ENCODE measurements at regions of chr16 and their contacts with region 1.

Region 1: GRCh38 chr16:23803591-23804123 is 32.1 kb upstream of the PRKCB start:
- DNase-seq: peak; percentile 79 to 91 (median 85)
- ATAC-seq: peak; percentile 98
- H3K4me3 ChIP-seq: peak overlapping the region; percentile 9; the same call in 1 of the 2 replicates
- H3K27ac ChIP-seq: peak overlapping the region; percentile 58
- H3K4me1 ChIP-seq: peaks cover 3 to 22% of the 10 kb centered on the region in 2 experiments; a peak in 4 of 5 replicates
- H3K27me3 ChIP-seq: no peaks in the 10 kb centered on the region
- CTCF ChIP-seq: peak; percentile 89 to 93 (median 93)
- EP300 ChIP-seq: no peak; the same call in 1 of the 2 replicates
- POLR2A ChIP-seq: no peak
- RAD21 ChIP-seq: peak; percentile 82 to 95

Region 2: GRCh38 chr16:23823475-23824384 is 20.1 kb after region 1 on chr16:
- CTCF ChIA-PET with region 1: no interaction called
- POLR2A ChIA-PET with region 1: interaction called, 14 read pairs
- in situ Hi-C with region 1: no loop called
- intact Hi-C with region 1: loop called (anchors 2 kb)
- DNase-seq: peak in 1 of 4 experiments; percentile 78
- ATAC-seq: peak; percentile 51
- H3K4me3 ChIP-seq: no peak overlapping the region
- H3K27ac ChIP-seq: peak overlapping the region; percentile 82
- H3K4me1 ChIP-seq: peaks cover 28 to 51% of the 10 kb centered on the region in 2 experiments
- H3K27me3 ChIP-seq: no peaks in the 10 kb centered on the region
- CTCF ChIP-seq: no peak
- EP300 ChIP-seq: peak; percentile 8; the same call in 1 of the 2 replicates
- POLR2A ChIP-seq: no peak
- RAD21 ChIP-seq: no peak

Region 3: GRCh38 chr16:23877107-23878090 is 73.7 kb after region 1 on chr16:
- CTCF ChIA-PET with region 1: no interaction called
- POLR2A ChIA-PET with region 1: interaction called, 5 read pairs
- in situ Hi-C with region 1: no loop called
- intact Hi-C with region 1: loop called (anchors 1 kb)
- DNase-seq: no peak
- ATAC-seq: peak; percentile 49
- H3K4me3 ChIP-seq: no peak overlapping the region
- H3K27ac ChIP-seq: 0 out of 3 replicates have a peak overlapping the region, but pooled peaks have one; percentile 5
- H3K4me1 ChIP-seq: peaks cover 7 to 19% of the 10 kb centered on the region in 2 experiments; a peak in 3 of 5 replicates
- H3K27me3 ChIP-seq: no peaks in the 10 kb centered on the region
- CTCF ChIP-seq: peak; percentile 10 to 38 (median 32); a peak in 3 of 6 replicates
- EP300 ChIP-seq: no peak
- POLR2A ChIP-seq: no peak
- RAD21 ChIP-seq: peak; percentile 21 to 45; a peak in 2 of 4 replicates

Region 4: DNA sequence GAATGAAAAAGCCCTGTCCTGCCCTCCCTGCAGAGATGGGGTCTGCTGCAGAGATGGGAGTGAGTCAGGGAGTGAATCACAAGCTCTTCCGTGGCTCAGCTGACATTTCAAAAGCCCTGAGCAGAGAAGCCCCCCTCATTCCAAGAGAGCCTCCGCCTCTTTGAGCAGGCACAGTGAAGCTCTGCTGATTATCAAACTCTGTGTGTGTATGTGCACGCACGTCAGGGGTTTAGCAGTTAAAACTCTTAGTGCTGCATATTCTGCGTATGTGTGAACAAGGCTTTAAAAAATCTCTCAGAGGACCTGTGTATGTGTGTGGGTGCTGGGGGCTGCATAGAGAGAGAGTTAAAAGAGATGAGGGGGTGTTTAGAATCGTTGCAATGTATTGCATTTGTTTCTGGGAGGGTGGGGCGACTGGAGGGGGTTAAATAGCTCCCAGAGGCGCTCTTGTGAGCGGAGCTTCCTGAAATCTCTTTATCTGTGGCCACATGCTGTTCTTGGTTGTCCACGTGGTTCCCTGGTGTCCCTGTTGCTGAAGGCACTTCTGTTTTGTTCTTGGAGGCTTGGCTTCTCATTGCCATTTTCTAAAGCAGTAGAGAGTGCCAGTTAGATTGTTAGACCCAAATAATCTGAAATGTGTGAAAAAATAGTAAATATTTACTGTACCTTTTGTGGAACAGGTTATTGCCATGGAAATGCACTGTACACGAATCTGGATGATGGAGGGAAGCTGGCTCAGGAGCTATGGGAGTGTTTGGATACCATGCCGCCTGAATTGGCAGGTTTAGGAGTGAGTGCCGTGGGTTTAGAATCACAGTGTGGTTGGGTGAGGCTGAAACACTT is 148.7 kb after region 1 on chr16:
- CTCF ChIA-PET with region 1: no interaction called
- POLR2A ChIA-PET with region 1: interaction called, 5 read pairs
- in situ Hi-C with region 1: no loop called
- intact Hi-C with region 1: loop called (anchors 5 kb)
- DNase-seq: peak; percentile 63 to 91 (median 78)
- ATAC-seq: peak; percentile 87
- H3K4me3 ChIP-seq: peak overlapping the region; percentile 15; the same call in 1 of the 2 replicates
- H3K27ac ChIP-seq: peak overlapping the region; percentile 85
- H3K4me1 ChIP-seq: peaks cover 12 to 61% of the 10 kb centered on the region in 2 experiments
- H3K27me3 ChIP-seq: no peaks in the 10 kb centered on the region
- CTCF ChIP-seq: peak in 1 of 3 experiments; percentile 2; a peak in 1 of 6 replicates
- EP300 ChIP-seq: peak; percentile 86
- POLR2A ChIP-seq: no peak
- RAD21 ChIP-seq: peak in 1 of 2 experiments; percentile 16; a peak in 3 of 4 replicates

Region 5: DNA sequence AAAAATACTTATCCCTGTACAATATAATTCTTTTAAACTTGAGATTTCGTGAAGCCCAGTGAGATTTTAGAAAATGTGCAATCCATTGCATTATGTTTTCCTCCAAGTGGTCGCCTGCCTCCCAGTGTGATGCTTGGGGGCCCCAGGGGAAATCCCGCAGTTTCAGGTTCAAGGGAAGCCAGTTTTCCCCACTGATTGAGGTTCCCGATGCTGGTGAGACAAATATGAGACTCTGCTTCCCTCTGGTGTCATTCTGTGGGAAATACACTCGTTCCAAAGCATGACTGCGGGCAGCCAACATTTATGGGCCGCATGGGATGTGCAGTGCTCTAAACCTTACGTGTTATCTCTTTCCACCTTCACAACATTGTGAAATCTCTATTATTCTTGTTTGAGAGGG is 233.0 kb after region 1 on chr16:
- CTCF ChIA-PET with region 1: interaction called, 5 read pairs
- POLR2A ChIA-PET with region 1: no interaction called
- in situ Hi-C with region 1: no loop called
- intact Hi-C with region 1: loop called (anchors 1 kb)
- DNase-seq: peak; percentile 37 to 57 (median 41)
- ATAC-seq: peak; percentile 68
- H3K4me3 ChIP-seq: no peak overlapping the region
- H3K27ac ChIP-seq: no peak overlapping the region
- H3K4me1 ChIP-seq: peaks cover 0 to 3% of the 10 kb centered on the region in 2 experiments; a peak in 2 of 5 replicates
- H3K27me3 ChIP-seq: no peaks in the 10 kb centered on the region; a peak in 1 of 5 replicates
- CTCF ChIP-seq: peak; percentile 52 to 63 (median 58)
- EP300 ChIP-seq: no peak
- POLR2A ChIP-seq: no peak
- RAD21 ChIP-seq: peak; percentile 62 to 75